ENCODE measurements at regions of chr2 and their contacts with region 1.

Region 1: DNA sequence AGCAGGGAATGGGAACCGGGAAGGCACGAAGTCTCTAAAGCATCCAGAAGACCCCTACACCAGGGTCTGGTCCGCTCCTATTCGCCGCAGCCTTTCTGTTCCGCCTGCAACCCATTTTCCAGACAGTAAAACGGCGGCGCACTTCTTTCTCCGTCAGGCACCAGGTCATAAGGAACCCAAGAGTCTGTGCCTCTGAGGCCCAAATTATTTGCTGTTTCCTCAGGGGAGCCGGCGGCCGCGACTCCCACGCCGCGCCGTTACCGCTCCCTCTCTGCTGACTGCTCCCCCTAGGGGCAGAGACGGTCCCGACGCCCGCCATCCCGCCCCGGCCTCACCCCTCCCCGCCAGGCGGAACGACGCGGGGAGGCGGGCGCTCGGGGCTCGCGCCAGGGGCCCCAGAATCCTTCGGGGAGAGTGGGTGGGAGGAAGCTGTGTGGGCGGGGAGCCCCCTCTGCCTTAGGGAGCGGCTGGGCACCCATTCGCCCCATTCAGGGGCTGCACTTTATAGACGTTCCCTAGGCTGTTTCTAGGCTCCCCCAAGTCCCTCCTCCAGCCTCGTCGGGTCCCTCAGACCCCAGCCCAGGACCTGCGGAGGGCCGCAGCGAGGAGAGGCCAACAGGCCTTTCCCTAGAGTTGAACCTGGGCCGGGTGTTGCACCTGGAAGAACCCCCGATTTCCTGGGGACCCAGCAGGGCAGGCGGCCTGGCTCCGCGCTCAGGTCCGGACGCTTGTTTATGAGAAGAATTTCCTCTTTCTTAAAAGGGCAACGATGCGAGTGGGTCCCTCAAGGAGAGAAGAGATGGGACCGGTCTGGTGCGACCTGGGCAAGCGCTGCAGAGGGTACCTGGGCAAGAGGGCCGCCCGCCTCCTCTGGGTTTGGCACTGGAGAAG is 3.6 kb upstream of the CTDSP1 start:
- DNase-seq: peak; percentile 97
- ATAC-seq: peak; percentile 70
- H3K4me3 ChIP-seq: peak overlapping the region; percentile 85
- H3K27ac ChIP-seq: peak overlapping the region; percentile 99
- H3K4me1 ChIP-seq: peaks cover 22% of the 10 kb centered on the region
- H3K27me3 ChIP-seq: no peaks in the 10 kb centered on the region
- CTCF ChIP-seq: peak; percentile 91
- POLR2A ChIP-seq: no peak
- RAD21 ChIP-seq: peak; percentile 74

Region 2: DNA sequence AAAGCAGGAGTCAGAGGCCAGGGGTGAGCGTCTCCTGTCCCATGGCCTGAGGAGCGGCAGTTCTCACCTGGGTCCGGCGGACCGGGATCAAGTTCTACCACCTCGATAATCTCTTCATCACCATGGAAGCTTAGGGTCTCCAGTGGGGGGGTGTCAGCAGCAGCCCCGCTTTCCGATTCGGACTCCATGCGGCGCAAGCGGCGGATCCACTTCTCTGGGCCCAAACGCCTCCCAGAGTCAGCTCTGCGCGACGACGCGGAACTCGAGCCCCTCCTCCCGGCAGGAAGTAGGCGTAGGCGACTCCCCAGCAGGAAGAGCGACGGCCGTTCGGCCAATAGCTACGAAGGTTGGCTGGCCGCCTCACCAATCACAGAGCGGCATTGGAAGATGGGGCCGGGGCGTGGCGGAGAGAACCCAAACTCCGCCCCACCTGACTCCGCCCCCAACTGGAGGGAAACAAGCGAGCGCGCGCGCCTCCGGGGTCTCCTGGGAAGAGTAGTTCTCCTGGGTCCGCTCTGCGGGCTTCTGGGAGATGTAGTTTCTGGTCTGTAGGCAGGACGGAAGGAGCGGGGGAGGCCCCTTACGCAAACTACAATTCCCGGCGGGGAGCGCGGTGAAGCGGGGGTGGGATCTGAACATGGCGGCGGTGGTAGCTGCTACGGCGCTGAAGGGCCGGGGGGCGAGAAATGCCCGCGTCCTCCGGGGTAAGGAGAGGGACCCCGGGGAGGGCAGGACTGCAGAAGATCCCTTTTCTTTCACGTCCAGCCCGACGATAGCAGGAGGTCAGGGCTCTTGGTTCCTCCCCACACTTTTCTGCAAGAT is 125.9 kb before region 1 on chr2 and contains the starts of genes AAMP and PNKD:
- CTCF ChIA-PET with region 1: no interaction called
- POLR2A ChIA-PET with region 1: no interaction called
- dilution Hi-C with region 1: no loop called
- in situ Hi-C with region 1: loop called (anchors 10 kb)
- intact Hi-C with region 1: loop called (anchors 1 kb)
- DNase-seq: peak; percentile 99
- ATAC-seq: peak; percentile 94
- H3K4me3 ChIP-seq: peak within 1 kb of the TSS; percentile 72
- H3K27ac ChIP-seq: peak within 1 kb of the TSS; percentile 64
- H3K4me1 ChIP-seq: peaks cover 10% of the 10 kb centered on the region
- H3K27me3 ChIP-seq: no peaks in the 10 kb centered on the region
- CTCF ChIP-seq: peak; percentile 28
- POLR2A ChIP-seq: peak; percentile 93
- RAD21 ChIP-seq: no peak
- total RNA-seq, gene AAMP: 112 and 118 TPM in 2 replicates
- total RNA-seq, gene PNKD: 19.2 and 22.2 TPM in 2 replicates

Region 3: DNA sequence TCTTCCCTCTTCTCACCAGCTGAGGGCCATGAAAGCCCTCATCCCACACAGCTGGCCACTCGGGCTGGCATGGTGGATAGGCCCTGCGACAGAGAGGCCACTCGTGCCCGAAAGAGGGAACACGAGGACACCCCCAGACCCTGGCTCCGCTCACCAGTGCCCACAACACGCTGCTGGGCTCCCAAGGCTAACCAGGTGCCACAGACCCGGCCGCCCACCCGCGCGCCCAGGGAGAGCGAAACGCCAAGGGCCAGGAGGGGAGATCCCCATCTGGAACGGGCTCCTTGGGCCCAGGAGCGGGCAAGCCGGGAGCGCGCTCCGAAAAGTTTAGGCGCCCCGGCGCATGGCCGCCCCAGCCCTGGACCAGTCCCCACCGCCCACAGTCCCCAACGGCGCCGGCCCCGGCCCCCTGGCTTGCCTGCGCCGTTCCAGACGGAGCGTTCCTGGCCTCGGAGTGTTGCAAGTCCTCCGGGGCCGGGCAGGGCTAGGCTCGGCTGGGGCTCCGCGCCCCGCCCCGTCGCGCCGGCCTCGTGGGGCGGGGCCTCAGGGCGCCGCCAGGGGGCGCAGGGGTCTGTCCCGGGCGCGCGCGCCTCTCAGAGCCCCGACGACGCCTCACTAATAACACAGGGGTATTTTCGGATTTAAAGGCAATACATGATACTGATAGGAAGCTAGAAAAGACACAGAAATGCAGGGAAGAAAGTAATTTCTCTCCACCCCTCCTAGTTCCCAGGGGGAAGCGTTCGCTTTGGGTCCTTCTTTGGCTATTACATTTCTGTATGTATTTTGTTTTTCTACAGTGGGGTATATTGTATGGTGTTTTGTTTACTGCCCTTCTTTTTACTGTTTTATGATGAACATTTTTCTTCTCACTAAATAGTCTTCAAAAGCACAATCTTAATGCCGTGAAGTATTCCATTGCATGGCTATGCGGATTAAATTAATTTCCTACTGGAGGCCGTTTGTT is 103.7 kb before region 1 on chr2 and contains the start of gene TMBIM1:
- CTCF ChIA-PET with region 1: interaction called, 6 read pairs
- POLR2A ChIA-PET with region 1: interaction called, 3 read pairs
- dilution Hi-C with region 1: no loop called
- in situ Hi-C with region 1: no loop called
- intact Hi-C with region 1: loop called (anchors 2 kb)
- DNase-seq: peak; percentile 58
- ATAC-seq: peak; percentile 93
- H3K4me3 ChIP-seq: peak within 1 kb of the TSS; percentile 86
- H3K27ac ChIP-seq: peak within 1 kb of the TSS; percentile 92
- H3K4me1 ChIP-seq: peaks cover 20% of the 10 kb centered on the region
- H3K27me3 ChIP-seq: no peaks in the 10 kb centered on the region
- CTCF ChIP-seq: peak; percentile 93
- POLR2A ChIP-seq: peak; percentile 42; the same call in 1 of the 2 replicates
- RAD21 ChIP-seq: peak; percentile 60
- total RNA-seq, gene TMBIM1: 78.6 and 102 TPM in 2 replicates

Region 4: DNA sequence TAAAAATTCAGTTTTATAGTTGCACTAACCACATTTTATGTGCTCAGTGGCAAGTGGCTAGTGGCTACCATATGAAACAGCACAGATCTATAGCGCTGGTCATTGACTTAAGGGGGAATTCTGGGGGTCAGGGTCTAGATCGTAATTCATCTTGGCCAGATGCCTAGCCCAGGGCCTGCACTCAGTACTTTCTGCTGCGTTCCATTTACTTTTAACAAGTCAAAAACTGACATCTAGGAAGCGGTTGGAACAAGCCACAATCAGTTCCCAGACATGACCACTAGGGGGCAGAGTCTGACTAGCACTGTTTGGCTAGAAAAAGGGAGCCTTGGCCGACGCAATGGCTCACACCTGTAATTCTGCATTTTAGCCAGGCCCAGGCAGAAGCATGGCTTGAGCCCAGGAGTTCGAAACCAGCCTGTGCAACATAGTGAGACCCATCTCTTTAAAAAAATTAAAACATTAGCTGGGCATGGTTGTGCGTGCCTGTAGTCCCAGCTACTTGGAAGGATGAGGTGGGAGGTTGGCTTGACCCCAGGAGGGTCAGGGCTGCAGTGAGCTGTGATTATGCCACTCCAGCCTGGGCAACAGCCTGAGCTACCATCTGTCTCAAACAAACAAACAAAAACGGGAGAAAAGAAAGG is 94.7 kb before region 1 on chr2:
- CTCF ChIA-PET with region 1: no interaction called
- POLR2A ChIA-PET with region 1: no interaction called
- dilution Hi-C with region 1: no loop called
- in situ Hi-C with region 1: no loop called
- intact Hi-C with region 1: loop called (anchors 1 kb)
- DNase-seq: peak; percentile 82
- ATAC-seq: peak; percentile 93
- H3K4me3 ChIP-seq: no peak overlapping the region
- H3K27ac ChIP-seq: no peak overlapping the region
- H3K4me1 ChIP-seq: peaks cover 4% of the 10 kb centered on the region; the same call in 1 of the 2 replicates
- H3K27me3 ChIP-seq: no peaks in the 10 kb centered on the region
- CTCF ChIP-seq: peak; percentile 93
- POLR2A ChIP-seq: no peak
- RAD21 ChIP-seq: peak; percentile 96

Region 5: DNA sequence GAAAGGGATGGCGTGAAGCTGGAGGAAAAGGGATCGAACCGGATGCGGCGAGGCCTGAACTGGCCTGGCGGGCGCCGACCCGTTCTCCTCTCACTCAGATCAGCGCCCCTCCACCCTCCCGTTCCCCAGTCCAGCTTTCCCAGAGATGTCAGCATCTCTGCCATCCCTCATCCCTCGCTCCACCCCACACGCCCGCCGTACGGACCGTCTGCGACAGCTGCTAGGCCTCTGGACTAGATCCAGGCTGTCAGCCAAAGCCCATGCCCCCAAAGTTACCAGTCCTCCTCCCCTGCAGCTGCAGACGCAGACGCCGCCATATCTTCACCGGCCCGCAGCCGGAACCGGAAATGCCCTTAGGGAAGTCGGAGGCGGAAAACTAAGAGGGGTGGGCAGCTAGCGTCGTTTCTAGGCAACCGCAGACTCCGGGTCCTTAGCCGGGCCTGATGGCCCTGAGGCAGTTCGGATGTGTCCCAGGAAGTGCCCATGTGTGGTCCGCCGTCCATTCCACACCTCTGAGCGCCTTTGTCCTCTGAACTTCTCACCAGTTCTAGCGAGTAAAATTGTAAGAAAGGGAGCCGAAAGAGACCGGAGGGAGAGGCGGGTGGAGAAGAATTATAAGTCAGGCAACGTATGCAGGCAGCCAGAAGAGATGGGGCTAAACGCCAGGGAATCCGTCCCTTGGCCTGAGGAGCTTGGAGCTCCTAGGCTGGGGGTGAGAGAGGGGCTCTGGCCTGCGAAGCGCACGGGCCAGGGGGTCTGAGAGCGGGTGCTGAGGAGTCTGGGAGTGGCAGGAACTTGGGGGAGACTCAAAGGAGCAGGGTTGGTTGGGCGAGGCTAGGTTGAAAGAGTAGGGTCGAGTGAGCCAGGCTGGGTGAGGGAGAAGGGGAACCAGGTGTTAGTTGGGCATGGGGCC is 275.9 kb after region 1 on chr2 and contains the starts of genes RNF25 and STK36:
- CTCF ChIA-PET with region 1: no interaction called
- POLR2A ChIA-PET with region 1: no interaction called
- dilution Hi-C with region 1: no loop called
- in situ Hi-C with region 1: no loop called
- intact Hi-C with region 1: no loop called
- DNase-seq: peak; percentile 90
- ATAC-seq: peak; percentile 98
- H3K4me3 ChIP-seq: peak within 1 kb of the TSS; percentile 75
- H3K27ac ChIP-seq: peak within 1 kb of the TSS; percentile 94
- H3K4me1 ChIP-seq: peaks cover 2% of the 10 kb centered on the region; the same call in 1 of the 2 replicates
- H3K27me3 ChIP-seq: no peaks in the 10 kb centered on the region
- CTCF ChIP-seq: no peak
- POLR2A ChIP-seq: peak; percentile 76
- RAD21 ChIP-seq: no peak
- total RNA-seq, gene RNF25: 54.4 and 56.5 TPM in 2 replicates
- total RNA-seq, gene STK36: 15.3 and 17.6 TPM in 2 replicates

Measured in IMR-90 (cell line).